GM10248 (cell line): ENCODE measurements at regions of chr21 and their contacts with region 1.

Region 1: DNA sequence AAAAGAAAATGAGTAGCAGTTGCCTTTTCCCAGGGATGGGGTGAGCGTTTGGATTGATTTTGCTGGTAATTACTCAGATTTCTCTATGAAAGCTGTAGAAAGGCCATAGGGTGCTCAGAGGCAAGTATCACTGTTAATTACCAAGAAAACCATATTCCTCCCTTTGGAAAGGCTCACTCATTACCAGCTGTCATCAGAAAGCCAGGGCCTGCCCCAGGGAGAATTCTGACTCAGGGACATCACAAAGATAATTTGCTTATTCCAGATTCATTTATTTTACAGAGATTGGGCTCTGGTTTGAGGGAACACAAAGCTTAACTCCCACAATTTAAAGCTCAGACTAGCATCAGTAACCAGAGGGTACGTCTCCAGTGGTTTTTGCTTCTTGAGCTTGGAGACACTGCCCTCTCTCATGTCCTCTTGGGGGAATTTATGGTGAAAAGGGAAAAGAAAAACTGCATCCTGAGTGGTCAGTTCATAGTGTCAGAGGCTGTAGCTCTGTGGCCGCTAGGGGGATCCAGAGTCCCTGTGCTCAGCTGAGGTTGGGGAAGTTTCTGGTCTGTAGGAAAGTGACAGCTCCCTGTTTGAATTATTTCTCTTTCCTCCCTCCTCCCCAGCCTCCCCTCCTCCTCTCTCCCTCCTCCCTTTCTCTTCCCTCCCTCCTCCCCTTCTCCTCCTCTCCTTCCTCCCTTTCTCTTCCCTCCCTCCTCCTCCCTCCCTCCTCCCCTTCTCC is 204.3 kb downstream of the KCNJ6 start:
- DNase-seq: peak; percentile 71
- CTCF ChIP-seq: peak; percentile 91

Region 2: DNA sequence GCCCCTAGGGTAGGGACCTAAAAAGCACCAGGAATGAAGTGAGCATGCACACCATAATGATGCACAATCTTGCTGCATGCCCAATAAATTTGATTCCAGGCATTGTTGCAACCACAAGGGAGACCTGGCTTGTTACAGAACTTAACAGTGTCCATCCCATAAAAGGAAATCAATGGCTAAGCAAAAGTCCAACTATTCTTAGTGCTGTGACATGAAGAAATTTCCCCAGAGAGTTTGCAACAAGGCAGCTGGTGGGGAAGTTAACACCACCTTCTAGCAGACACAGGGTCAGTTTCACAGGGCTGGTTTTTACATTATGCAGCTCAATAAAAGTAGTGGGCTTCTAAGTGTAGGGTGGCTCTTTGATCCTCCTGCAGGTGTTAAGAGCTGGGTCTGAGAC is 16.9 kb before region 1 on chr21:
- CTCF ChIA-PET with region 1: interaction called, 19 read pairs
- POLR2A ChIA-PET with region 1: interaction called, 13 read pairs
- DNase-seq: no peak
- CTCF ChIP-seq: no peak

Region 3: GRCh38 chr21:37700641-37701202 is 11.3 kb before region 1 on chr21:
- CTCF ChIA-PET with region 1: interaction called, 19 read pairs
- POLR2A ChIA-PET with region 1: interaction called, 13 read pairs
- DNase-seq: peak; percentile 80
- CTCF ChIP-seq: peak; percentile 65

Region 4: GRCh38 chr21:37909932-37910331 is 197.9 kb after region 1 on chr21:
- CTCF ChIA-PET with region 1: no interaction called
- POLR2A ChIA-PET with region 1: no interaction called
- DNase-seq: no peak
- CTCF ChIP-seq: no peak

Region 5: DNA sequence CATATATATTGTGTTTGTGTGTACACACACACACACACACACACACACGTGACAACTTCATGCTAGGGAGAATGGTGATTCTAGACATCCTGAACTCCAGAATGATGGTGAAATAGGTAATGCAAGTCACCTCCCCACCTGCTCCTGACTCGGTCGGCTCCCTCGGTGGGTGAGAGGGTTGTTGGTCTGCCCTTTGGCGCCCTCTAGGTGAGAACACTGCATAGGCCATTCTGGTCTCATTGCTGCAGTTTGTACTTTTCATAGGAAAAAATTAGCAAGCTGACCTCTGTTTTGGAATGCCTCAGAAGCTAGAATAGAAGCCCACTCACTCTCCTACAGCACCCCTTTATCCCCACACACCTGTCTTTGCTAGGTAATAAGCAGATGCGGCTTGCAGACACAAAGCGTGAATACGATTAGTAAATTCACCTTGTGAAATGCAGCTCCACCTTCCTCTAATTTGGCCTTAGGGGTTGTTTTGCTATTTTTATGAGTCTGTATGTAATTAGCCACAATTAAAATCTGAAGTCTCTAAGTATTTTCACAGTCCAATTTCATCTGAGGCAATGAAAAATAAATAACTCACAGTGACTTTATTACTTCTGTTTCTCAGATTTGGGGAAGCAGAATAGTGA is 414.8 kb after region 1 on chr21:
- CTCF ChIA-PET with region 1: interaction called, 22 read pairs
- POLR2A ChIA-PET with region 1: no interaction called
- DNase-seq: peak; percentile 47
- CTCF ChIP-seq: peak; percentile 70